ENCODE measurements at regions of chr2 and their contacts with region 1.

Region 1: DNA sequence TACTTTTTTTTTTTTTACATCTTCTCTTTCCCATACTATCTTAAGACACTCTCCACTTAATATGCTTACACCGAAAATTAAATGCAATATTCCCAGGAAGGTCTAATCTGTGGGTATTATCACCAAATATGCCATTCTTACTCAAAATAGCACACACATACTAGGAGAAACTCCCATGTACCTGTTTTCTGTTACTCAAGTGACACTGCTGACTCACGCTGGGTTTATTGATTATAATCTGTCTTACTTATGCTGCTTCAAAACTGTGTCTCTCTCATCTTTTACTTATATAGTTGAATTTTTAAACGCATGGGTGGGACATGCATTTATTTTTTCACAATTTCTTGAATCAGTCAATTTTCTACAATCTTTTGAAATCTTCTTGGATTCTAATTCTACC is 29.9 kb downstream of the MRPL19 start:
- DNase-seq: no peak
- ATAC-seq: no peak
- H3K4me3 ChIP-seq: no peak overlapping the region
- H3K4me3 Mint-ChIP-seq: no peak overlapping the region
- H3K27ac ChIP-seq: no peak overlapping the region
- H3K27ac Mint-ChIP-seq: no peak overlapping the region
- H3K4me1 ChIP-seq: no peaks in the 10 kb centered on the region
- H3K4me1 Mint-ChIP-seq: peaks cover 7 to 14% (median 9%) of the 10 kb centered on the region in 3 donors
- H3K27me3 ChIP-seq: no peaks in the 10 kb centered on the region
- H3K27me3 Mint-ChIP-seq: no peaks in the 10 kb centered on the region

Region 2: GRCh38 chr2:75640621-75641121 is 35.8 kb before region 1 on chr2:
- CTCF ChIA-PET with region 1: interaction called, 12 to 13 read pairs
- POLR2A ChIA-PET with region 1: no interaction called
- DNase-seq: peak in 29 of 35 experiments; percentile 9 to 66 (median 29)
- ATAC-seq: peak; percentile 89 to 93 (median 90)
- H3K4me3 ChIP-seq: no peak overlapping the region
- H3K4me3 Mint-ChIP-seq: no peak overlapping the region
- H3K27ac ChIP-seq: no peak overlapping the region
- H3K27ac Mint-ChIP-seq: no peak overlapping the region
- H3K4me1 ChIP-seq: no peaks in the 10 kb centered on the region
- H3K4me1 Mint-ChIP-seq: peaks cover 0 to 2% (median 0%) of the 10 kb centered on the region in 3 donors
- H3K27me3 ChIP-seq: peaks cover 0 to 7% of the 10 kb centered on the region in 2 experiments
- H3K27me3 Mint-ChIP-seq: peaks cover 21 to 23% of the 10 kb centered on the region in 2 donors

Region 3: DNA sequence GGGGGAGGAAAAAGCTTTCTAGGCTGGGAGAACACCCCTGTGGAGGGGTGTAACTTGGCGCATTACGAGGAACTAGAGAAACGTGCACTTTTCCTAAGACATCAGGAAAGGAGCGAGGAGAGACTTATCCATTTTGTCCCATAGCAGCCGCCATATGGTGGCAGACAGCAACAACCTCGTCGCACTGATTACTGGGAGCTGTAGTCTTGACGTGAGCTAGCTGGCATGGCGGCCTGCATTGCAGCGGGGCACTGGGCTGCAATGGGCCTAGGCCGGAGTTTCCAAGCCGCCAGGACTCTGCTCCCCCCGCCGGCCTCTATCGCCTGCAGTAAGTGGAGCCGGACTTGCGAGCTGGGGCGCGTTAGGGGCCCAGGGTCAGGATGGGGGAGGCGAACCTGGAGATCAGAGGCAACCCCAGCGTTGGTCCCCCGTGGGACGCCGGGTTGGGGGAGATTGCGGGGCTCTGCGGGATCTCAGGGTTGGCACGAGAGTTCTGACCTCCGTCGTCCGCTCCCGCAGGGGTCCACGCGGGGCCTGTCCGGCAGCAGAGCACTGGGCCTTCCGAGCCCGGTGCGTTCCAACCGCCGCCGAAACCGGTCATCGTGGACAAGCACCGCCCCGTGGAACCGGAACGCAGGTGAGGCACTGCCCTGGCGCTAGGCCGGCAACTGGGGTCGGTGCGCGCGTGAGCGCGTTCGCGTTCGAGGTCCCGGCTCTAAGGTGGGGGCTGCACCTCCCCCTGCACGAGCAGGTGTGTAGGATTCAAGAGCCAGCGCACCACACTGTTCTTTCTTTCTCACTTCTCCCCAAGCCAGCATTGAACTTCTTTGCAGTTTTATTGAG is 29.7 kb before region 1 on chr2 and contains the start of gene MRPL19:
- CTCF ChIA-PET with region 1: interaction called, 12 to 13 read pairs
- POLR2A ChIA-PET with region 1: interaction called in 1 of 2 experiments, 4 read pairs
- DNase-seq: peak; percentile 51 to 86 (median 69)
- ATAC-seq: peak; percentile 96 to 98 (median 97)
- H3K4me3 ChIP-seq: peak within 1 kb of the TSS; percentile 91 to 96
- H3K4me3 Mint-ChIP-seq: peak within 1 kb of the TSS; percentile 93 to 95 (median 94)
- H3K27ac ChIP-seq: peak within 1 kb of the TSS; percentile 64
- H3K27ac Mint-ChIP-seq: peak within 1 kb of the TSS; percentile 86 to 94
- H3K4me1 ChIP-seq: peaks cover 6 to 14% of the 10 kb centered on the region in 2 experiments
- H3K4me1 Mint-ChIP-seq: peaks cover 37 to 47% (median 45%) of the 10 kb centered on the region in 3 donors
- H3K27me3 ChIP-seq: no peaks in the 10 kb centered on the region
- H3K27me3 Mint-ChIP-seq: no peaks in the 10 kb centered on the region
- total RNA-seq, gene MRPL19: 16.6 to 31.5 (median 22.6) TPM

Measured in T-cell (primary cell).